Activated T-helper 1 cell treated with anti-CD3 and anti-CD28 coated beads, Interleukin-12 subunit alpha, Interleukin-12 subunit beta, Interleukin-2, Interleukin-4 antibody, amounts not matched to agents 30 ng/mL and 10 ng/mL and 1 ng/mL, durations not matched to agents 14 hours and 24 hours and 36 hours (primary cell): ENCODE measurements at regions of chr11 and their contacts with region 1.

Region 1: GRCh38 chr11:43852057-43852636 is 28.5 kb upstream of the ALKBH3 start:
- DNase-seq: peak; percentile 33
- H3K4me3 Mint-ChIP-seq: no peak overlapping the region
- H3K27ac Mint-ChIP-seq: no peak overlapping the region
- H3K4me1 Mint-ChIP-seq: no peaks in the 10 kb centered on the region
- H3K27me3 Mint-ChIP-seq: no peaks in the 10 kb centered on the region

Region 2: DNA sequence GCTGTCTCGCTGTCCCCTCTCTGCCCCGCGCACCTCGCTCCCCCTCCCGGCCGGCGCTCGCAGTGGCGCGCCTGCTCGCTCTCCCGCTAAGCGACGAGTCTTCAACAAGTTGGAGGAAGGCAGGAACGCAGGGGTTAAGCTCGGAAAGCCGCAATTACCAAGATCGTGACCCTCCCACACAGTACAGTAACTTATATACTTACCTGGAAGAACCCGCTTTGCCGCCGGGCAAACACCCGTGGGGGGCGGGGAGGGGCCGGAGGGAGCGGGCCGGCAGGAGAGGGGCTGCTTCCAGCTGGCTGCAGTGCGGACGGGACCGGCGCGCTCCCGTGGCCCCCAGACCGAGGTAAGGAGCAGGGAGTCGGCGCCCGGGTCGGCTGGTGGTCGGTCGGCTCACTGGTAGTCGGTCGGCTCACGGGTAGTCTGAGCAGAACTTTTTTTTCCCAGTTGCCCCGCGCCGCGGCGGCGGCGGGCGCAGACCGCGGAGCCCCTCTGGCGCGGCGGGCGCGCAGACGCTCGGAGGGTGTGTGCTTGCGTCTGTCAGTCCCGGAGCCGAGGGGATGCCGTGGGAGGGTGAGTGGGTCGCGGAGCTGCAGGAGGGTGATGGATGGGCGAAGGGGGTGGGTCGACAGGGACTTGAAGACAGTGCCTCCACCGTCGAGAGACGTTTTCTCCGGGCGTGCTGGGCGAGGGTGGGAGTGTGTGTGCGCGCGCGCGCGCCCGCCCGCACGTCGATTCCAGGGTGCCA is 272.8 kb before region 1 on chr11:
- intact Hi-C with region 1: loop called (anchors 5 kb)
- DNase-seq: no peak
- H3K4me3 Mint-ChIP-seq: peak overlapping the region; percentile 39
- H3K27ac Mint-ChIP-seq: peak overlapping the region; percentile 23
- H3K4me1 Mint-ChIP-seq: peaks cover 12% of the 10 kb centered on the region
- H3K27me3 Mint-ChIP-seq: peaks cover 83% of the 10 kb centered on the region

Region 3: GRCh38 chr11:43825217-43825816 is 26.8 kb before region 1 on chr11:
- intact Hi-C with region 1: loop called (anchors 1 kb)
- DNase-seq: no peak
- H3K4me3 Mint-ChIP-seq: no peak overlapping the region
- H3K27ac Mint-ChIP-seq: no peak overlapping the region
- H3K4me1 Mint-ChIP-seq: peaks cover 4% of the 10 kb centered on the region
- H3K27me3 Mint-ChIP-seq: no peaks in the 10 kb centered on the region

Region 4: GRCh38 chr11:43830928-43831440 is 21.2 kb before region 1 on chr11:
- intact Hi-C with region 1: loop called (anchors 1 kb)
- DNase-seq: peak; percentile 2
- H3K4me3 Mint-ChIP-seq: no peak overlapping the region
- H3K27ac Mint-ChIP-seq: peak overlapping the region; percentile 80
- H3K4me1 Mint-ChIP-seq: peaks cover 18% of the 10 kb centered on the region
- H3K27me3 Mint-ChIP-seq: no peaks in the 10 kb centered on the region